H1 (cell line): ENCODE measurements at regions of chr17 and their contacts with region 1.

Region 1: DNA sequence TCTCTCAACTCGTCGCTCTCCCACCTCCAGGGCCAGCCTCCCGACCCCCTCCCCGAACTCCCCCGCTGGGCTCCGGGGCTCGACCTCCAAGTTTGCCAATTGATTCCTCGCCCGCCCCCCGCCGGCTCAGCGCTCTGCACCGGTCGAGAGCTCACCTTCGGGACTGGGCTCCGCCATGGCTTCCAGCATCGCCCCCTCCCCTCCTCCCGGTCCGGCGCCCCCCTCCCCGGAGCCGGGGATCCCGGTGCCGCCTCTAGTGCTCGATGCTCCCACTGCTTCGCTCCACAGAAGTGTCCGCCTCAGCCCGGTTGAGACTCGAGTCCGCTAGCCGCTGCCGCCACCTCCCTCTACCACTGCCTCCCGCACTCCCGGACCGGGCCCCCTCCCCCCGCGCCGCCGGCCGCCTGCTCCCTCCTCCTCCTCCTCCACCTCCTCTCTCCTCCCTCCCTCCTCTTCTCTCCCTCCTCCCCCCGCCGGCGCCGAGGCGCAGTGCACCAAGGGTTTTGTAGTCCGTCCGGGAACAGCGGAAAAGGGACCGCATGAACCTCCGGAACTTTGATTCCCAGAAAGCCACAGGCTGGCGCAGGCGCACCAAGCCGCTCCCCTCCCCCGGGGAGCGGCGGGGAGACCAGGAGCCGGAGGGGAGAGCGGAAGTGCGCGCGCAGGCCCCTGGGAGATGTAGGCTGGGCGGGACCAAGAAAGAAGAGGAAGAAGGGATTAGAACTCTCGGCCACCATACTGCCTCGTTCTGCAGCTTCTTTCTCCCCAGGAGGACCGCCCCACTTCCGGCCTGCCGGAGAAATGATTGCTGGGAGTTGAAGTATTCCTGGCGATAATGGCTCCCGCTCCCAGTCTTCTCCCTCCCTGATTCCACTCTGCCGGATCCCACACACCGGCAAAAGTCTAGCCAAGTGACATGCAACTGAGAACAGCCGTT is at the start of gene PHF23:
- DNase-seq: peak; percentile 94 to 99
- H3K4me3 ChIP-seq: peak within 1 kb of the TSS; percentile 91 to 97 (median 94)
- H3K27ac ChIP-seq: peak within 1 kb of the TSS; percentile 63
- H3K4me1 ChIP-seq: peaks cover 5 to 24% (median 12%) of the 10 kb centered on the region in 4 experiments
- H3K27me3 ChIP-seq: no peaks in the 10 kb centered on the region
- CTCF ChIP-seq: no peak
- EP300 ChIP-seq: no peak
- POLR2A ChIP-seq: peak; percentile 27 to 36; a peak in 1 of 3 replicates
- RAD21 ChIP-seq: no peak
- total RNA-seq, gene PHF23: 62.8 and 65.1 TPM in 2 replicates

Region 2: GRCh38 chr17:7114875-7115614 is 124.3 kb before region 1 on chr17:
- CTCF ChIA-PET with region 1: no interaction called
- POLR2A ChIA-PET with region 1: no interaction called
- DNase-seq: no peak
- H3K4me3 ChIP-seq: no peak overlapping the region
- H3K27ac ChIP-seq: no peak overlapping the region
- H3K4me1 ChIP-seq: peaks cover 0 to 12% (median 4%) of the 10 kb centered on the region in 4 experiments; a peak in 4 of 7 replicates
- H3K27me3 ChIP-seq: no peaks in the 10 kb centered on the region
- CTCF ChIP-seq: no peak
- EP300 ChIP-seq: no peak
- POLR2A ChIP-seq: no peak
- RAD21 ChIP-seq: no peak

Region 3: DNA sequence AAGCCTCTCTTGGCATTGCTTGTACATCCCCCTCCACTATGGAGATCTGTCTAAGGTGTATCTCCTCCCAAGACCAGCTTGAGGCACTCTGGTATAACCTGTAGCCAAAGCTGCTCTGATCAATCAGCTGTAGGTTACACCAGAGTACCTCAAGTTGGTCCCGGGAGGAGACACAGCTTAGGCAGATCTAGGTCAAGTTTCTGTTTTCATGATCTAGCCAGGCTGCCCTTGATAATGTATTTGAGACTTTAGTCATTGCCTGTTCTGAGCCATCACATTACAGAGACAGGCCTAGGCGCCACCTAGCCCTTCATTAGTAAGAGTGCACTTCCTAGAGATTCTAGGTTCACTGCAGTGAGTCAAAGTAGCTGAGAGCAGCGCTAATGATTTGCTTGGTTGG is 91.6 kb before region 1 on chr17:
- CTCF ChIA-PET with region 1: no interaction called
- POLR2A ChIA-PET with region 1: no interaction called
- DNase-seq: no peak
- H3K4me3 ChIP-seq: no peak overlapping the region
- H3K27ac ChIP-seq: no peak overlapping the region; the same call in 1 of the 2 replicates
- H3K4me1 ChIP-seq: peaks cover 0 to 5% (median 0%) of the 10 kb centered on the region in 4 experiments; a peak in 3 of 7 replicates
- H3K27me3 ChIP-seq: no peaks in the 10 kb centered on the region
- CTCF ChIP-seq: peak in 1 of 3 experiments; percentile 20; a peak in 1 of 4 replicates
- EP300 ChIP-seq: no peak
- POLR2A ChIP-seq: no peak
- RAD21 ChIP-seq: peak in 1 of 2 experiments; percentile 7; a peak in 1 of 4 replicates

Region 4: GRCh38 chr17:7191571-7192270 is 47.6 kb before region 1 on chr17:
- CTCF ChIA-PET with region 1: no interaction called
- POLR2A ChIA-PET with region 1: no interaction called
- DNase-seq: peak; percentile 53 to 86
- H3K4me3 ChIP-seq: no peak overlapping the region
- H3K27ac ChIP-seq: no peak overlapping the region
- H3K4me1 ChIP-seq: no peaks in the 10 kb centered on the region
- H3K27me3 ChIP-seq: no peaks in the 10 kb centered on the region
- CTCF ChIP-seq: no peak
- EP300 ChIP-seq: no peak; a peak in 1 of 3 replicates
- POLR2A ChIP-seq: no peak
- RAD21 ChIP-seq: no peak

Region 5: DNA sequence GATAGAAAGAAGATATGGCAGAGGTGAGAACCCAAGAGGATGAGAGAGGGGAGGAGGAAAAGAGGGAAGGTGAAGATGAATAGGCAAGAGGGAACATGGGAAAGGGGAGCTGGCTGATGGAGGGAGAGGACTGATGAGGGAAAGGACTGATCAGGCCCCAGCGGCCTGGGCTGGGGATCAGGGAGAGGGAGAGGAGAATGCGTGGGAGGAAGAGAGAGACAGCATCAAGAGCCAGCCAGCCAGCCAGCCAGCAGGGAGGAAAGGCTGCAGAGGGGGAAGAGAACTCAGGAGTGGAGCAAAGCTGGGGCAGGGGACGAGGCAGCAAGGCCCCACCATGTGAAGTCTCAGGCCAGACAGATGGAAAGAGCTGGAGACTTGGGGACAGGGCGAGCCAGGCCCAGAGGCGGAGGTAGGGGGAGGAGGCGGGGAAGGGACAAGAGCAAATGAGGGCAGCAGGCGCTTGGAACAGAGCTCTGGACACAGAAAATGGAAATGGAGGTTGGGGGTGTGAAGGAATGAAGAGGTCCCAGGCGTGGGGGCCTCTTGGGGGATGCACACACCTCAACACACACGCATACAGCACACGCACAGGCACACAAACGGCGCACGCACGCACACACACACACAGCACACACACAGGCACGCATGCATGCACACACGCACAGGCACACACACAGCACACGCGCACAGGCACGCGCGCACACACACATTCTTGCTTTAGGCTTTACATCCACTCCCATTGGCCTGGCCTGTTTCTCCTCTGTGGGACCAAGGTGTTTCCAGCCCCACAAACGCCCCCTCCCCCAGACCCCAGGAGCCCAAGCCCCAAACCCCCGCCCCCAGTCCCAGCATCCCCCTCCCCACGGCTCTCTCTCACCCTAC is 32.0 kb before region 1 on chr17:
- CTCF ChIA-PET with region 1: interaction called, 4 read pairs
- POLR2A ChIA-PET with region 1: interaction called, 10 read pairs
- DNase-seq: no peak
- H3K4me3 ChIP-seq: peak overlapping the region; percentile 36 to 62 (median 42); a peak in 7 of 8 replicates
- H3K27ac ChIP-seq: no peak overlapping the region
- H3K4me1 ChIP-seq: peaks cover 8 to 42% (median 32%) of the 10 kb centered on the region in 4 experiments
- H3K27me3 ChIP-seq: no peaks in the 10 kb centered on the region; a peak in 1 of 7 replicates
- CTCF ChIP-seq: no peak
- EP300 ChIP-seq: no peak
- POLR2A ChIP-seq: no peak
- RAD21 ChIP-seq: no peak

Region 6: GRCh38 chr17:7214300-7215135 is 24.8 kb before region 1 on chr17:
- CTCF ChIA-PET with region 1: interaction called, 46 read pairs
- POLR2A ChIA-PET with region 1: interaction called, 386 read pairs
- DNase-seq: peak; percentile 99 to 100
- H3K4me3 ChIP-seq: peak overlapping the region; percentile 44 to 68 (median 50); a peak in 7 of 8 replicates
- H3K27ac ChIP-seq: peak overlapping the region; percentile 86
- H3K4me1 ChIP-seq: peaks cover 9 to 45% (median 28%) of the 10 kb centered on the region in 4 experiments
- H3K27me3 ChIP-seq: no peaks in the 10 kb centered on the region
- CTCF ChIP-seq: peak; percentile 32 to 76 (median 63)
- EP300 ChIP-seq: peak in 1 of 2 experiments; percentile 7; a peak in 1 of 3 replicates
- POLR2A ChIP-seq: no peak
- RAD21 ChIP-seq: peak; percentile 23; a peak in 2 of 4 replicates

Region 7: GRCh38 chr17:7219812-7220581 is 19.4 kb before region 1 on chr17 and contains the starts of genes ACADVL and DLG4:
- CTCF ChIA-PET with region 1: interaction called, 46 read pairs
- POLR2A ChIA-PET with region 1: interaction called, 386 read pairs
- DNase-seq: peak in 1 of 2 experiments; percentile 90
- H3K4me3 ChIP-seq: peak within 1 kb of the TSS; percentile 76 to 93 (median 86)
- H3K27ac ChIP-seq: peak within 1 kb of the TSS; percentile 49
- H3K4me1 ChIP-seq: peaks cover 6 to 36% (median 20%) of the 10 kb centered on the region in 4 experiments
- H3K27me3 ChIP-seq: no peaks in the 10 kb centered on the region
- CTCF ChIP-seq: no peak
- EP300 ChIP-seq: no peak
- POLR2A ChIP-seq: peak; percentile 79 to 90
- RAD21 ChIP-seq: no peak
- total RNA-seq, gene ACADVL: 169 and 181 TPM in 2 replicates
- total RNA-seq, gene DLG4: 43.1 and 45.9 TPM in 2 replicates

Region 8: GRCh38 chr17:7252176-7253043 is 13.1 kb after region 1 on chr17 and contains the start of gene ELP5:
- CTCF ChIA-PET with region 1: interaction called, 4 read pairs
- POLR2A ChIA-PET with region 1: interaction called, 161 read pairs
- DNase-seq: peak in 1 of 2 experiments; percentile 97
- H3K4me3 ChIP-seq: peak within 1 kb of the TSS; percentile 58 to 84 (median 79)
- H3K27ac ChIP-seq: peak within 1 kb of the TSS; percentile 97
- H3K4me1 ChIP-seq: peaks cover 0 to 9% (median 4%) of the 10 kb centered on the region in 4 experiments; a peak in 6 of 7 replicates
- H3K27me3 ChIP-seq: no peaks in the 10 kb centered on the region
- CTCF ChIP-seq: peak in 2 of 3 experiments; percentile 20 to 28; a peak in 2 of 4 replicates
- EP300 ChIP-seq: no peak
- POLR2A ChIP-seq: peak in 1 of 2 experiments; percentile 91; a peak in 2 of 3 replicates
- RAD21 ChIP-seq: peak in 1 of 2 experiments; percentile 11; a peak in 1 of 4 replicates
- total RNA-seq, gene ELP5: 75.4 and 78.1 TPM in 2 replicates

Region 9: DNA sequence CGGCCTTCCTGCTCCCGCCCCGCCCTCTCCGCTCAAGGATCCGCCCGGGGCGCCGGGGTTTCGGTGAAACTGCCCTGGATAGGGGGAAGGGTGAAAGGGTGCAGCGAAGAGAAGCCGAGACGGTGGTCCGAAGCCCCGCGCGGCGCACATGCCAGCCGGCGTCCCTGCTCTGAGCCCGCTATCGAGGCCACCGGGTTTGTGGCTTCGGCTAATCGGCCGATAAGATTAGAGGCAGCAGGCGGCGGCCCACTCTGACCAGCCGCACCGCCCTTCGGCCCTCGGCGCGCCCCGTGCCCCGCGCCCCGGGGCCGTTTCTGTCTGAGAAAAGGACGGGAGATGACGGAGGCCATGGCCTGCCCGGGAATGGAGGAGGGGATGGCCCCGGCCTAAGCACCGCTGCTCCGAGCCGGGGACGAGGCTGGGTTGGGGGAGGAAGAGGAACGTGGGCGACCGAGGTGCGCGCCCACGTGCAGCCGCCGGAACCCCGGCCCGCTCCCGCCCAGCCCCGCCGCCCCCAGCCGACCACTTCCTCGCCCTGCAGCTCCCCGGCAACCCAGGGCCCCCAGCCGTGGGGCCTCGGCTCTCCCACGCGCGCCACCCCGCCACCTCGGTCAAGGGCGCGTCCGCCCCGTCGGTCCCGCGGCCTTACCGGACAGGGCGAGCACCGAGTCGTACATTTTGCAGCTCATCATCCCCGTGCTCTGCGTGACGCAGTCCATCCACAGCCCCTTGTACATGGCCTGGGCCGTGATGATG is 22.0 kb after region 1 on chr17:
- CTCF ChIA-PET with region 1: no interaction called
- POLR2A ChIA-PET with region 1: interaction called, 161 read pairs
- DNase-seq: peak in 1 of 2 experiments; percentile 86
- H3K4me3 ChIP-seq: peak overlapping the region; percentile 93 to 98 (median 96)
- H3K27ac ChIP-seq: peak overlapping the region; percentile 91
- H3K4me1 ChIP-seq: peaks cover 4 to 15% (median 6%) of the 10 kb centered on the region in 4 experiments; a peak in 6 of 7 replicates
- H3K27me3 ChIP-seq: no peaks in the 10 kb centered on the region
- CTCF ChIP-seq: no peak
- EP300 ChIP-seq: peak in 1 of 2 experiments; percentile 96; a peak in 2 of 3 replicates
- POLR2A ChIP-seq: peak; percentile 72 to 91
- RAD21 ChIP-seq: no peak

Region 10: DNA sequence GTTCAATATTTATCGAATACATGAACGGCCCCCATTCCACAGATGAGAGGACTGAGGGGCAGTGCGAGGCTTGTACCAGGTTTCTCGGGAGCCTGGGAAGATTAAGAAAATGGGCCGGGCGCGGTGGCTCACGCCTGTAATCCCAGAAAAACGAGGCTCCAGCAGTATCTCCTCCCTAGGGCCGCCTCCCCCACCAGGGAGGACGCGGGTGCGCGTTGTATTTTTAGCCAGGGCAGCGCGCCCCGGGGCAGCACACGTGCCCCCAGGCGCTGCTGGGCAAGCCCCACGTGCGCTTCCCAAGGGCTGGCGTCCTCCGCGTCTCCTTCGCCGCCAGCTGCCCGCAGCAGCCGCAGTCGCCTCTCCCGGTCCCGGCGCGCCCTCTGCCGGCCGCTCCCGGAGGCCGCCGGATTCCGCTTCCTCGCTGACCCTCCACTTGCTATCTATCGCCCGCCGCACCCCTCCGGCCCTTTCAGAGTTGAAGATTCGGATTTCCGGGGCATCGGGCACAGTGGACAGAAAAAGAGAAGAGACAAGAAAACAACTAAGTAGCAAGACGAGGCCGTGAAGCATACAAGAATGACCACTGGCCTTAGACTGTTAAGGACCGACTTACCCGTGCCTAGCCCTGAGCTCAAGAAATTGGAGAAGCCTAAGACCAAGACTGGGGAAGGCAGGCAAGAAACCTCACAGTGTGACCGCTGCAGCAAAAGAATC is 57.0 kb after region 1 on chr17:
- CTCF ChIA-PET with region 1: interaction called, 13 read pairs
- POLR2A ChIA-PET with region 1: interaction called, 11 read pairs
- DNase-seq: peak in 1 of 2 experiments; percentile 96
- H3K4me3 ChIP-seq: peak overlapping the region in 1 of 4 experiments; percentile 51; a peak in 2 of 8 replicates
- H3K27ac ChIP-seq: no peak overlapping the region
- H3K4me1 ChIP-seq: peaks cover 0 to 14% (median 5%) of the 10 kb centered on the region in 4 experiments; a peak in 5 of 7 replicates
- H3K27me3 ChIP-seq: peaks cover 3 to 11% (median 9%) of the 10 kb centered on the region in 4 experiments
- CTCF ChIP-seq: peak; percentile 84 to 96 (median 90)
- EP300 ChIP-seq: peak in 1 of 2 experiments; percentile 83; a peak in 2 of 3 replicates
- POLR2A ChIP-seq: no peak
- RAD21 ChIP-seq: peak; percentile 93 to 95